Endothelial cell of umbilical vein (primary cell): ENCODE measurements at regions of chr6 and their contacts with region 1.

Region 1: DNA sequence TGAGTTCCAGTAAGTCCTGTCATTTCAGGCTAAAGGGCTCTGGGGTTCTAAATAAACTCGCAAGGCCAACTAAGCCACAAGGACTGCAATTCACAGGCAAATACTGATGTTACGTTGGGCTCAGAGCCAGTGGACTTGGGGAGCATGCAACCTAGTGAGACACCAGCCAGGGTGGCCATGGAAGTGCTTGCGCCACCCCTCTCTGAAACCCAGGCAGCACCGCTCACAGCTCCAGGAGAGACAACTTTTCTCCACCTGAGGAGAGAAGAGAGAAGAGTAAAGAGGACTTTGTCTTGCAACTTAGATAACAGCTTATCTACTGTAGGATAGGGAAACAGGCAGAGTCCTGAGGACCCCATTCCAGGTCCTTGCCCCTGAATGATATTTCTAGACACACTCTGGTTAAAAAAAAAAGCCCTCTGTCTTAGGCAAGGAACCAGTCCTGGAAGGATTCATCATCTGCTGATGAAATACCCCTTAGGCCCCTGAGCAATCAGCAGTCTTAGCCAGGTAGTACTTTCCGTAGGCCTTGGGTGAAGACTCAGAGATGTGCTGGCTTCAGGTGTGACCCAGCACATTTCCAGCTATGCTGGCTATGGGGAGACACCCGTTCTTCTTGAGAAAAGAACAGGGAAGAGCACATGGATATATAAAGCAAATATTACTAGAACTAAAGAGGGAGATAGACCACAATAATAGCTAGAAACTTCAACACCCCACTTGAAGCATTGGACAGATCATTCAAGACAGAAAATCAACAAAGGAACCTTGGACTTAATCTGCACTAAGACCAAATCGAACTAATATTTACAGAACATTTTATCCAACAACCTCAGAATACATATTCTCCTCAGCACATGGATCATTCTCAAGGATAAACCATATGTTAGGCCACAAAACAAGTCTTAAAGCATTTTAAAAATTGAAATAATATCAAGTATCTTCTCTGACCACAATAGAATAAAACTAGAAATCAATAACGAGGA is 31.5 kb upstream of the TBC1D32 start:
- DNase-seq: no peak
- H3K4me3 ChIP-seq: no peak overlapping the region
- H3K27ac ChIP-seq: no peak overlapping the region
- H3K4me1 ChIP-seq: no peaks in the 10 kb centered on the region
- H3K27me3 ChIP-seq: no peaks in the 10 kb centered on the region
- CTCF ChIP-seq: no peak
- POLR2A ChIP-seq: no peak

Region 2: DNA sequence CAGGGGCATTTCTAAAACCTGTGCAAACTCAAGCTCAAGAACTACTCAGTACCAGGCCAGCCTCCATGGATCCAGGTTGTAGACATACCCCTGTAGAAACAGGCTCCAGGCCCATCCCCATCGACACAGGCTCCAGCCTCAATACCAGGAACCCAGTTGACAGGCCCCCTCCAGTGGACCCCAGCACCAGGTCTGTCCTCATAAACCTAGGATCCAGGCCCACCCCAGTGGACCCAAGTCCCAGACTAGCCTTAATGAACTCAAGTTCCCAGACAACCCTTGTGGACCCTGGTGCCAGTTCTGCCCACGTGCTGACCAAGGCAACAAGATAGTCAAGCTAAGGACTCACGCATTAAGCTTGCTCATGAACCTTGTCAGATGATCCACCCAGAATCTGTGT is 508.4 kb before region 1 on chr6:
- CTCF ChIA-PET with region 1: no interaction called
- POLR2A ChIA-PET with region 1: no interaction called
- dilution Hi-C with region 1: no loop called
- intact Hi-C with region 1: no loop called
- DNase-seq: no peak
- H3K4me3 ChIP-seq: no peak overlapping the region
- H3K27ac ChIP-seq: no peak overlapping the region
- H3K4me1 ChIP-seq: no peaks in the 10 kb centered on the region
- H3K27me3 ChIP-seq: no peaks in the 10 kb centered on the region
- CTCF ChIP-seq: no peak
- POLR2A ChIP-seq: no peak

Region 3: DNA sequence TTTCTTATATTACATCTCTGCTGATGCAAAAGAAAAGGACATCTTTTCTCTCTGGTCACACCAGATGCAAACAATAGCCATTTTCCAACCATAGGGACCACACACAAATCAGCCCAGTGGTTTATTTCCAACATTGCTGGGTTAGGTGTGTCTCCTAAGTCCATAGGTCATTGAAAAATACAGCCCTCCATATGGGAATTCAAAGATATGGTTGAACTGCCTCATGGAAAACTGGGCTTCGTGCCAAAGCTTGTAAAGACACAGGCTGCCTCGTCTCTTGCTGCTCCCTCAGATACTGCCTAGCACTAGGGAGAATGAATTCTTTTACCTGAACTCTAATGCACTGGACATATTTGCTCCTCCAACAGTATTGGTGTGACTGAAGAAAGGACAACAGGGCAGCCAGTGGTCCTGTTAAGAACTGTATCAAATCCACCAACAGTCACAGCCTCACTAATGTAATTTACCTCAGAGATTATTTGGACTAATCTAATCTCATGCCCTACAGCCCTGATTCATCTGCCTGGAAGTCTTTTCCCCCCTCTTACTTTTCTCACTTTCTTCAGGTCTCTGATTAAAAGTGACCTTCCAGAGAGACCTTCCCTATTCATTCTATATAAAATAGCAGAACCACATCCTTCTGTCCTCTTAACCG is 16.8 kb after region 1 on chr6:
- CTCF ChIA-PET with region 1: no interaction called
- POLR2A ChIA-PET with region 1: no interaction called
- dilution Hi-C with region 1: no loop called
- intact Hi-C with region 1: loop called (anchors 2 kb)
- DNase-seq: no peak
- H3K4me3 ChIP-seq: no peak overlapping the region
- H3K27ac ChIP-seq: no peak overlapping the region
- H3K4me1 ChIP-seq: no peaks in the 10 kb centered on the region
- H3K27me3 ChIP-seq: no peaks in the 10 kb centered on the region
- CTCF ChIP-seq: no peak
- POLR2A ChIP-seq: no peak